ENCODE measurements at regions of chr2 and their contacts with region 1.

Region 1: DNA sequence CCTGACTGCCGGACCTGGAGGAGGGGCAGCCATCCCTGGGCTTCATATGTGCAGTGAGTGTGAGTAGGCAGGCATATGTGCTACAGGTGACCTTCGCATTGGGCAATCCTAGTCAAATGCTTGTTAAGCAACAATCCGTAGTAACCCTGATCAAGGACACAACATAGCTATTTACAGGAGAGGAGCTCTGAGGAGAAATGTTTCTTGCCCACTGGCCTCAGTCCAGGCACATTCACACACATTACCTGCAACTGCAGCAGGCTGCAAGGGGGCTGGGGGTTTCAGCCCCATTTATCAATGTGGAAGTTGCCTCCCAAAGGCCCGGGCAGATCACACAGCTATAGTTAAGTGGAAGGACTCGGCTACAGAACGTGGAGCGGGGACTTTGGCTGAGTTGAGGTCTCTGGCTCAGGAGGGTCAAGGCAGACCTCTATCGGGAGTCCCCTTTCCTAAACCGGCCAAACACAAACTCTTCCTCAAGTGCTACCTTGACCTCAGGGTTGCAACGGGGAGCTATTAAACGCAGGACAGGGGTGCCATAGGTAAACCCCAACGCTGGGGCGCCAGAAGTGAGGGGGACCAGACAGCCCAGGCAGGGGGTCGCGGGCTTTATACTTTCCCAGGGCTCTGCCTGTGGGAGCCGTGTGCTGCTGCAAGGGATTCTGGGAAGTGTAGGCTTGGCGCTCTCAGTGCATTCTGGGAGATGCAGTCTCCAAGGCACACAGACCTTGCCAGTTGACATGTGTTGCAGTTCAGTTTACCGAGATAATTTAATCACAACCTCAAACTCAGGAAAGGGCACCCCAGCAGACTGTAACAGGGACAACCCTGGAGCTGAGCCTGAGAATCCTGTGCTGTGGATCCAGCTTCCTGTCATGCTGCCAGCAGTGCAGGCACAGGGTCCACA is 9.4 kb downstream of the KHK start:
- DNase-seq: peak; percentile 67 to 90 (median 82)
- ATAC-seq: peak; percentile 47 to 66 (median 61)
- H3K4me3 ChIP-seq: peak overlapping the region; percentile 12 to 47 (median 29)
- H3K27ac ChIP-seq: peak overlapping the region; percentile 7 to 90 (median 78)
- H3K4me1 ChIP-seq: peaks cover 0 to 58% (median 20%) of the 10 kb centered on the region in 4 donors
- H3K27me3 ChIP-seq: no peaks in the 10 kb centered on the region
- CTCF ChIP-seq: no peak
- POLR2A ChIP-seq: peak; percentile 46

Region 2: GRCh38 chr2:26925087-26925791 is 170.8 kb before region 1 on chr2:
- intact Hi-C with region 1: no loop called
- DNase-seq: no peak
- ATAC-seq: peak in 1 of 4 donors; percentile 17
- H3K4me3 ChIP-seq: no peak overlapping the region
- H3K27ac ChIP-seq: no peak overlapping the region
- H3K4me1 ChIP-seq: no peaks in the 10 kb centered on the region
- H3K27me3 ChIP-seq: no peaks in the 10 kb centered on the region
- CTCF ChIP-seq: no peak
- POLR2A ChIP-seq: no peak

Region 3: DNA sequence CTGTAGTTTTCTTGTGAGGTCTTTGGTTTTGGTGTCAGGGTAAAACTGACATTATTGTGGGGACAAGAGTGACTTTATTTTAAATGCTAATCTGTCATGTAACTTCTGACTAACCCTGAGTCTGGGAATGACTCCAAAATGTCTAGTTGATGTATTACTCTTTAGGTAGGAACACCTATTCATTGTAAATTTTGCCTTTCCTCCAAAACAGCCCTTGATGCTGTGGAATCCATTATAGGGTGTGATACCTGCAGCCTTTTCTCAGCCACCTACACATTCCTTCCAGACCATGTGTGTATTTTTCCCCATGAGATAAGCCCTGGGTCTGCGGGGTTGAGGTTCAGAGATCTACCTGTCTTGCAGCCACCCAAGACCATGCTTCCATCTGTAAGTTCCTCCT is 47.3 kb after region 1 on chr2:
- intact Hi-C with region 1: no loop called
- DNase-seq: no peak
- ATAC-seq: no peak
- H3K4me3 ChIP-seq: no peak overlapping the region
- H3K27ac ChIP-seq: no peak overlapping the region
- H3K4me1 ChIP-seq: no peaks in the 10 kb centered on the region
- H3K27me3 ChIP-seq: no peaks in the 10 kb centered on the region
- CTCF ChIP-seq: no peak
- POLR2A ChIP-seq: no peak

Region 4: DNA sequence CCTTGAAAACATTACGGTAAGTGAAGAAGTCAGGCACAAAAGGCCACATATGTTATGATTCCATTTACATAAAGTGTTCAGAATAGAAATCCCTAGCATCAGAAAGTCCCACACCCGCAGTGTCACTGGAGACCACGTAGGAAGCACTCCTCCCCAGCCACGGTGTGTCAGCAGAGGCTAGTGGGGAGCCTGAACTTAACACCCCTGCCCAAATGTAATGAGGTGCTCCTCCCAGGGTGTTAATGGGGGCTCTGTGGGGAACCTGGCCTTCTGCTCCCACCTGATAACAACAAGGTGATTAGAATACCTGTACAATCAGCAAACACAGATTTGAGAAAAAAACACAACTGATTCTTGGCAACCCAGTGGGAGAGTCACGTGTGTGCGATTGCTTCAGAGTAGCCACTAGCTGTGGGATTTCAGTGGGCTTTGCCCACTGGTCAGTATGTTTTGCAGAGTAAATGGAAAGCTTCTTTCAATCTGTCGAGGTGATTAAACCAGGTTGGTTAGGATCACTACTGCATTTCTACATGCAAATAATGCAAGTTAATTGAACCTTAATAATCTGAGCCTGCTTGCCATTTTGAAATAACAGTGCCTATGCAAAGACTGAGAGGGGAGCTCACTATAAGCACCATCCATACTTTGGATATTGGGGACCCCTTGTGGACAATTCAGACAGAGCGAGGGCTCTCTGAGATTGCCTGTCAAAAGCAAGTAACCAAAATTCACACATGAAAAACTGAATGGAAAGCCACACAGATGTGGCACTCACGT is 95.2 kb after region 1 on chr2:
- intact Hi-C with region 1: loop called in 1 of 2 experiments (anchors 10 kb)
- DNase-seq: no peak
- ATAC-seq: peak; percentile 69 to 84 (median 74)
- H3K4me3 ChIP-seq: no peak overlapping the region
- H3K27ac ChIP-seq: peak overlapping the region; percentile 39 to 66 (median 45)
- H3K4me1 ChIP-seq: peaks cover 0 to 16% (median 7%) of the 10 kb centered on the region in 4 donors
- H3K27me3 ChIP-seq: no peaks in the 10 kb centered on the region
- CTCF ChIP-seq: peak; percentile 63 to 72 (median 70)
- POLR2A ChIP-seq: no peak

Region 5: DNA sequence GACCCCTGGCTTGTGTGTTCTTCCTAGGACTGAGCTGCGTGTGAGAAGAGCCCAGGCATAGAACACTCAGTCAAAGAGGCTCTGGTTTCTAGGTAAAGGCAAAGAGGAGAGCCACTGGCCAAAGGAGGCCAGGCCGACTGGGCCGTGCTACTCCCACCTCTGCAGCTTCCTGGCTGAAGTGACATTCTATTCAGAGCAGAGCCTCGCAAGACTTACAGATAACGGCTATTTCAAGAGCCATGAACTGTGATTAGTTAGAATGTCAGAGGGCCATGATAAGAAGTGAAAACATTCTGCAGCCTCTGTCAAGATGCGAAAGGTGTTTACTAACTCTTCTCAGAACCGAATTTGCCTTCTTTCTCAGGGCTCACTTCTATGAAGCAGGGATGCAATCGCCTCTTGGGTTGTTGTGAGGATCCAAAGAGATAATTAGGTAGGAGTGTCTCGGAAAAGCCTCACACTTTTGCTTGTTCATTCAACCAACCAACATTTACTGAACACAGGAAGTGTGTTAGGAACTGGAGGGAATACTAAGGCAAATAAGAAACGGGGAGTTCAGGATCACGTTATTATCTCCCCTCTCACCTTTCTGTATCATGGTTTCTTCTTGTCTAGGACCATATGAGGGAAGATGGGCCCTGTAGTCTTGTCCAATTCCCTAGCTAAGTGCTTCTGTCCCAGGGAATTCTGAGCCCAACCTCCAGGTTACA is 175.8 kb after region 1 on chr2:
- intact Hi-C with region 1: loop called in 1 of 2 experiments (anchors 10 kb)
- DNase-seq: no peak
- ATAC-seq: no peak
- H3K4me3 ChIP-seq: no peak overlapping the region
- H3K27ac ChIP-seq: no peak overlapping the region
- H3K4me1 ChIP-seq: peaks cover 0 to 6% (median 0%) of the 10 kb centered on the region in 4 donors
- H3K27me3 ChIP-seq: no peaks in the 10 kb centered on the region
- CTCF ChIP-seq: no peak
- POLR2A ChIP-seq: no peak

Region 6: GRCh38 chr2:27291865-27292264 is 195.9 kb after region 1 on chr2:
- intact Hi-C with region 1: loop called in 1 of 2 experiments (anchors 10 kb)
- DNase-seq: no peak
- ATAC-seq: no peak
- H3K4me3 ChIP-seq: no peak overlapping the region
- H3K27ac ChIP-seq: no peak overlapping the region
- H3K4me1 ChIP-seq: peaks cover 0 to 19% (median 6%) of the 10 kb centered on the region in 4 donors
- H3K27me3 ChIP-seq: no peaks in the 10 kb centered on the region
- CTCF ChIP-seq: no peak
- POLR2A ChIP-seq: no peak

Measured in right lobe of liver (tissue), 6 donors.